Transverse colon (tissue), 4 donors: ENCODE measurements at regions of chr12 and their contacts with region 1.

Region 1: GRCh38 chr12:131282292-131283080 is 328.8 kb downstream of the ADGRD1 start:
- DNase-seq: no peak
- H3K4me3 ChIP-seq: no peak overlapping the region
- H3K27ac ChIP-seq: no peak overlapping the region
- H3K4me1 ChIP-seq: no peaks in the 10 kb centered on the region
- H3K27me3 ChIP-seq: no peaks in the 10 kb centered on the region
- CTCF ChIP-seq: no peak
- EP300 ChIP-seq: no peak
- POLR2A ChIP-seq: no peak

Region 2: GRCh38 chr12:132460571-132460970 is 1178.1 kb after region 1 on chr12:
- in situ Hi-C with region 1: no loop called
- intact Hi-C with region 1: loop called (anchors 5 kb)
- DNase-seq: no peak
- H3K4me3 ChIP-seq: no peak overlapping the region
- H3K27ac ChIP-seq: no peak overlapping the region
- H3K4me1 ChIP-seq: no peaks in the 10 kb centered on the region
- H3K27me3 ChIP-seq: peaks cover 12% of the 10 kb centered on the region
- CTCF ChIP-seq: peak in 3 of 5 experiments; percentile 7 to 16 (median 10)
- EP300 ChIP-seq: no peak
- POLR2A ChIP-seq: no peak